ENCODE measurements at regions of chr4 and their contacts with region 1.

Region 1: GRCh38 chr4:111937368-111937767 is 207.9 kb upstream of the FAM241A start:
- DNase-seq: no peak
- H3K4me3 ChIP-seq: no peak overlapping the region
- H3K27ac ChIP-seq: no peak overlapping the region
- H3K4me1 ChIP-seq: no peaks in the 10 kb centered on the region
- H3K27me3 ChIP-seq: no peaks in the 10 kb centered on the region
- CTCF ChIP-seq: peak in 2 of 4 experiments; percentile 42 to 44
- POLR2A ChIP-seq: no peak

Region 2: GRCh38 chr4:110622841-110623717 is 1314.3 kb before region 1 on chr4 and contains the start of gene PITX2:
- intact Hi-C with region 1: loop called (anchors 10 kb)
- DNase-seq: peak; percentile 45
- H3K4me3 ChIP-seq: peak within 1 kb of the TSS; percentile 6 to 35
- H3K27ac ChIP-seq: no peak within 1 kb of the TSS
- H3K4me1 ChIP-seq: peaks cover 3% of the 10 kb centered on the region
- H3K27me3 ChIP-seq: peaks cover 57% of the 10 kb centered on the region
- CTCF ChIP-seq: no peak
- POLR2A ChIP-seq: peak; percentile 35
- total RNA-seq, gene PITX2: 2.0 to 2.3 TPM

Region 3: DNA sequence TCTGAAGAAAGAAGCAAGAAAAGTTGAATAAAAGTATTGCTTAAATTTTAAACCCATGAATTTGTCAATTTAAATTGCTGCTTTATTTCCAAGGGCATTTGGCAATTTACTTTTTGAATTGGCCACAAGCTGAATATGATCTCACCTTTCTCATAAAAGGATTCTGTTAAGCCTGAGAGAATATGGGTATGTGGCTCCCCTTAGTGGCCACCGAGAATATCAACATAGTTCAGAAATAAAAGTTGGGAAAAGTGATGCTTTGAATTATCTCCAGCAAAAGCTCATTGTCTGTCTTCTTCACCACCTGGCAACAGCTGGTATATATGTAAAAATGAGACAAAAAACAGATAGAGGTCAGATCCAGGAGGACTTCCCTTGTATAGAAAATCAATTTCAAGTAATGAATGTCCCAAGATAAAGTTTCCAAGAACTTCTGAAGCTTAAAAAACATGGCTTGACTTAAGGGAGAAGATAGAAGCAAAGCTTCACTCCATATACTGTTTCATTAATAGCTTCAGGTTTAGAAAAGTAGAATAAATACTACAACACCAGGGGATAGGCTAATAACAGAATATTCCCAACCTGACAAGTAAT is 82.8 kb before region 1 on chr4:
- intact Hi-C with region 1: loop called (anchors 10 kb)
- DNase-seq: peak; percentile 30
- H3K4me3 ChIP-seq: no peak overlapping the region
- H3K27ac ChIP-seq: no peak overlapping the region
- H3K4me1 ChIP-seq: no peaks in the 10 kb centered on the region
- H3K27me3 ChIP-seq: no peaks in the 10 kb centered on the region
- CTCF ChIP-seq: peak in 3 of 4 experiments; percentile 51 to 59 (median 53)
- POLR2A ChIP-seq: no peak